Endothelial cell of umbilical vein (primary cell): ENCODE measurements at regions of chr11 and their contacts with region 1.

Region 1: GRCh38 chr11:62217191-62217748 is 8.8 kb downstream of the SCGB2A1 start:
- DNase-seq: peak; percentile 31
- H3K4me3 ChIP-seq: no peak overlapping the region
- H3K27ac ChIP-seq: no peak overlapping the region
- H3K4me1 ChIP-seq: no peaks in the 10 kb centered on the region
- H3K27me3 ChIP-seq: peaks cover 6 to 9% of the 10 kb centered on the region in 2 experiments
- CTCF ChIP-seq: peak; percentile 31 to 38
- POLR2A ChIP-seq: no peak

Region 2: DNA sequence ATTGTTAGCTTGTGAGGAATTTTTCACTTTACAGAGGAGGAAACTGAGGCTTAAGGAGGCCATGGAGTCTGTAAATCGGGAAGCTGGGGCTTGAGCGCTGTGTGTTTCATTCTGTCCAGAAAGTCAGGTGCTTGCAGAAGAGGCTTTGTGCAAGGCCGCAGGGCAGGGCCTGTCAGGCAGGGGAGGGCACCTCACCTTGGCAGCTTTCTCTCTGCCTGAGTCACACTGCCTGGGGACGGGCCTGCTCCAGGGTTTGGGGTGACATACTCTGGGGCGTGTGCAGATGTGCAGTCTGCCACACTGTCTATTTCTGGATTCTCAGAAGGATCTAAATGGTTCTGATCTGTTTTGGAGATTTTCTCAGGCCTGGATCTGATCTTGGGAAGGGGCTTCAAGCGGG is 85.1 kb before region 1 on chr11:
- CTCF ChIA-PET with region 1: no interaction called
- POLR2A ChIA-PET with region 1: no interaction called
- dilution Hi-C with region 1: no loop called
- intact Hi-C with region 1: no loop called
- DNase-seq: no peak
- H3K4me3 ChIP-seq: no peak overlapping the region
- H3K27ac ChIP-seq: no peak overlapping the region
- H3K4me1 ChIP-seq: no peaks in the 10 kb centered on the region
- H3K27me3 ChIP-seq: no peaks in the 10 kb centered on the region
- CTCF ChIP-seq: no peak
- POLR2A ChIP-seq: no peak

Region 3: DNA sequence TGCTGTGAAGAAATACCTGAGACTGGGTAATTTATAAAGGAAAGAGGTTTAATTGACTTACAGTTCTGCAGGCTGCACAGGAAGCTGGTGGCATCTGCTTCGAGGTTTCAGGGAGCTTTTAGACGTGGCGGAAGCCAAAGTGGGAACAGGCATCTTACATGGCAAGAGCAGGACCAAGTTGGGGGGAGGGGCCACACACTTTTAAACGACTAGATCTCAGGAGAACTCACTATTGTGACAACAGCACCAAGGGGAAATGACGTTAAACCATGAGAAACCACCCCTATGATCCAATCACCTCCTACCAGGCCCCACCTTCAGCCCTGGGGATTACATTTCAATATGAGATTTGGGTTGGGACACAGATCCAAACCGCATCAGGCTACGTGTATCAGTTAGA is 92.7 kb after region 1 on chr11:
- CTCF ChIA-PET with region 1: interaction called, 65 read pairs
- POLR2A ChIA-PET with region 1: no interaction called
- dilution Hi-C with region 1: no loop called
- intact Hi-C with region 1: loop called (anchors 1 kb)
- DNase-seq: no peak
- H3K4me3 ChIP-seq: no peak overlapping the region
- H3K27ac ChIP-seq: no peak overlapping the region
- H3K4me1 ChIP-seq: no peaks in the 10 kb centered on the region
- H3K27me3 ChIP-seq: peaks cover 16 to 21% of the 10 kb centered on the region in 2 experiments
- CTCF ChIP-seq: no peak
- POLR2A ChIP-seq: no peak

Region 4: GRCh38 chr11:62315431-62315830 is 98.2 kb after region 1 on chr11:
- CTCF ChIA-PET with region 1: interaction called, 65 read pairs
- POLR2A ChIA-PET with region 1: no interaction called
- dilution Hi-C with region 1: no loop called
- intact Hi-C with region 1: loop called (anchors 1 kb)
- DNase-seq: no peak
- H3K4me3 ChIP-seq: no peak overlapping the region
- H3K27ac ChIP-seq: no peak overlapping the region
- H3K4me1 ChIP-seq: no peaks in the 10 kb centered on the region
- H3K27me3 ChIP-seq: peaks cover 8 to 12% of the 10 kb centered on the region in 2 experiments
- CTCF ChIP-seq: no peak
- POLR2A ChIP-seq: no peak

Region 5: DNA sequence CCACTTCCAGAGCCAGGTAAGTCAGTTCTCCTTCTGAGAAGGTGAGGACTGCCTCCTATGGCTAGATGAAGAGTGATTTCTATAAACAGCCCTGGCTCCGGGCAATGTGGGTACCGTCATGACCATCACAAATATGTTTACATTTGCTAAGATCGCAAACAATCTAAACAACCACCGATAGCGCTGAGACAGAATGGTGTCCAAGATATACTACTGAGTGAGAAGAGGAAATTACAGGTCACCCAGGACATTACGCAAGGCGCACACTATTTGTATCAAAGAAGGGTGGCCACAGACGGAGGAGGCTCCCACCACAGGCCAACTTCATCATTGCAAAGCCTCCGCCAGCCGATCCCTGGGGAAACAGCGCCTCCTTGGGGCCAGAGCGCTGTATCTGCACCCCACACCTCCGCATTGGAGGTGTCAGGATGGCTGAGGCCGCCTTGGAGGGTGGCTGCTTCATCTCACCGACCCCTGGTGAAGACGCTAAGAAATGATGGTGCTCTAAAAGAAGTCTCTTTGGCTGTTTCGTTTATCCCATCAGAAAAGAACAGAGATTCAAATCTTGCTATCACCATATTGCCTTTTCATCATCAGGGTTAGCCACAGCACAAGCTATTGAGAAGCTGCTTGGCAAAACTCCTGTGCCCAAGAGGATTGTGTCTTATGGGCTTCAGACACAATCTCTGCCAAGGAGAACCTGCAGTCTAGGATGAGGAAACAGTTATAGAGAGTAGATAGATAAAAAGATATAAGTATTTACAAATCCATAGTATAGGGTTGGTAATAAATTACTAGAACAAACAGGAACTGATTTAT is 107.7 kb after region 1 on chr11:
- CTCF ChIA-PET with region 1: interaction called, 6 read pairs
- POLR2A ChIA-PET with region 1: no interaction called
- dilution Hi-C with region 1: no loop called
- intact Hi-C with region 1: loop called (anchors 1 kb)
- DNase-seq: peak; percentile 45
- H3K4me3 ChIP-seq: no peak overlapping the region
- H3K27ac ChIP-seq: no peak overlapping the region
- H3K4me1 ChIP-seq: no peaks in the 10 kb centered on the region
- H3K27me3 ChIP-seq: peaks cover 0 to 5% of the 10 kb centered on the region in 2 experiments
- CTCF ChIP-seq: peak; percentile 79 to 82
- POLR2A ChIP-seq: no peak

Region 6: GRCh38 chr11:62370743-62371440 is 153.6 kb after region 1 on chr11:
- CTCF ChIA-PET with region 1: interaction called, 46 read pairs
- POLR2A ChIA-PET with region 1: no interaction called
- dilution Hi-C with region 1: no loop called
- intact Hi-C with region 1: no loop called
- DNase-seq: no peak
- H3K4me3 ChIP-seq: no peak overlapping the region
- H3K27ac ChIP-seq: no peak overlapping the region
- H3K4me1 ChIP-seq: no peaks in the 10 kb centered on the region
- H3K27me3 ChIP-seq: no peaks in the 10 kb centered on the region
- CTCF ChIP-seq: no peak
- POLR2A ChIP-seq: no peak